ENCODE measurements at regions of chr2 and their contacts with region 1.

Region 1: GRCh38 chr2:96265840-96266679 is at the starts of genes CIAO1 and TMEM127:
- DNase-seq: peak; percentile 99 to 100 (median 99)
- ATAC-seq: peak; percentile 98
- H3K4me3 ChIP-seq: peak within 1 kb of the TSS; percentile 80
- H3K27ac ChIP-seq: peak within 1 kb of the TSS; percentile 92
- H3K4me1 ChIP-seq: peaks cover 11% of the 10 kb centered on the region
- H3K27me3 ChIP-seq: no peaks in the 10 kb centered on the region
- total RNA-seq, gene CIAO1: 52.2 to 60.5 (median 56.0) TPM
- total RNA-seq, gene TMEM127: 77.8 to 90.0 (median 84.8) TPM

Region 2: DNA sequence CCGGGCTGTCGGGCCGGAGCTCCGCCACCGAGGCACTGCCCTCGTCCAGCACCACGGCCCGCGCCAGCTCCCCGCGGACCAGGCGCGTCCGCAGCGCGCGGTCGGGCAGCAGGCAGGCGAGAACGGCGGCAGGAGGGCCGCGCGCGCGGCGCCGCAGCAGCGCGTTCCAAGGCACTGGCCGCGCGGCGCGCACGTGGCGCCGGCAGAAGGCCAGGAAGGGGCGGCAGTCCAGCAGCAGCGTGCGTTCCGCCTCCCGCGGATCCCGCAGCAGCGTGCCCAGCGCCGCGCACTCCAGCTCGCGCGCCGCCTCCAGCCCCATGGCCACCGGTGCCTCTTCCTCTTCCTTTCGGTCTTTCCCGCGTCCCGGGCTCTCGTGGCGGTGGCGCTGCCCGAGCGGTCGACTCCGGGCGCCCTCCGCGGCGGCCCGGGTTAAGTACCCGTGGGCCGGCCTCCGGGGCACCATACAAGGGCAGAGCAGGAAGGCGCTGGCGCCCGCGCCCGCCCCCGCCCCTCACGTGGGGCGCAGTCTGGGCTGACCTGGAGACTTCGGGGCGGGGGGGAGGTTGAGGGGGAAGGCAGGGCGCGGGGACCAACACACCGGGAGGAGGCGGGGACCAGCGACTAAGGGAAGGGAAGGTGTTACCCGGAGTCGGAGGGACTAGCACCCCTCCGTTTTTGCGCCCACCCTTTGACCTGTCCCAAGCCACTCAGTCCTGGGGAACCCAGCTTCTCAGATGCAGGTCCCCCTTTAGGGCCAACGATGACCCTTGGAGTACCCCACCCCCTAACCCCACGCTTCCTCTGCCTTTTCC is 120.8 kb before region 1 on chr2 and contains the start of gene DUSP2:
- intact Hi-C with region 1: loop called in 2 of 4 experiments (anchors 10 kb)
- DNase-seq: peak; percentile 74 to 91 (median 90)
- ATAC-seq: peak; percentile 84 to 85
- H3K4me3 ChIP-seq: peak within 1 kb of the TSS; percentile 46
- H3K27ac ChIP-seq: no peak within 1 kb of the TSS
- H3K4me1 ChIP-seq: no peaks in the 10 kb centered on the region
- H3K27me3 ChIP-seq: no peaks in the 10 kb centered on the region
- total RNA-seq, gene DUSP2: 1.2 to 2.6 (median 1.4) TPM

Region 3: GRCh38 chr2:96195410-96196066 is 70.5 kb before region 1 on chr2:
- intact Hi-C with region 1: loop called in 1 of 4 experiments (anchors 10 kb)
- DNase-seq: no peak
- ATAC-seq: no peak
- H3K4me3 ChIP-seq: no peak overlapping the region
- H3K27ac ChIP-seq: no peak overlapping the region
- H3K4me1 ChIP-seq: peaks cover 3% of the 10 kb centered on the region
- H3K27me3 ChIP-seq: no peaks in the 10 kb centered on the region

Region 4: DNA sequence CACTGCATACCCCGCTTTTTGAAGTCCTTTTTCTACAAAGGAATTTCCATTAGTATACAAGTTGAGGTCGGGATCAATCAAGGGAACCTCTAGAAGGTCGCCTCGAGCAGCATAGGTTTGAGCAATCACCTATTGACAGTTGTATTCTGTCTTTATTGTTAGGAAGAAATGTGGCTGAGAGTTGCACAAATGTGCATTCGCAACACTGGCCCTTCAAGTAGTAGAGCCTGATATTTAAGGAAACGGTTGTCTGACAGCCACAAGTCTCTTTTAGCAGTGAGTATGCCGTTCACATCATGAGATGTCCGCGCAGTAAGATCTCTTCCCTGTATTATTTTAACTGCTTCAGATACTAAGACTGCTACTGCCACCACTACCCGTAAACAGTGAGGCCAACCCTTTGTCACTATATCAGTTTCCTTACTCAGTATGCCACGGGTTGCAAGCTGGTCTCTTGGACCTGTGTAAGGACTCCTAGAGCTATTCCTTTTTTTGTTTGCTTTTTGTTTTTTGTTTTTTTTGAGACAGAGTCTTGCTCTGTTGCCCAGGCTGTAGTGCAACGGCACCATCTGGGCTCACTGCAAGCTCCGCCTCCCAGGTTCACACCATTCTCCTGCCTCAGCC is 47.4 kb before region 1 on chr2:
- intact Hi-C with region 1: no loop called
- DNase-seq: no peak
- ATAC-seq: no peak
- H3K4me3 ChIP-seq: no peak overlapping the region
- H3K27ac ChIP-seq: no peak overlapping the region
- H3K4me1 ChIP-seq: no peaks in the 10 kb centered on the region
- H3K27me3 ChIP-seq: no peaks in the 10 kb centered on the region

Region 5: GRCh38 chr2:96315400-96316071 is 49.5 kb after region 1 on chr2:
- intact Hi-C with region 1: no loop called
- DNase-seq: no peak
- ATAC-seq: no peak
- H3K4me3 ChIP-seq: no peak overlapping the region
- H3K27ac ChIP-seq: no peak overlapping the region
- H3K4me1 ChIP-seq: no peaks in the 10 kb centered on the region
- H3K27me3 ChIP-seq: no peaks in the 10 kb centered on the region

Measured in right cardiac atrium (tissue), 5 donors.